Astrocyte of the cerebellum (primary cell): ENCODE measurements at regions of chr5 and their contacts with region 1.

Region 1: GRCh38 chr5:143205386-143205785 is 198.1 kb downstream of the NR3C1 start:
- DNase-seq: peak; percentile 81
- H3K4me3 ChIP-seq: no peak overlapping the region
- CTCF ChIP-seq: no peak

Region 2: GRCh38 chr5:143279698-143280097 is 74.3 kb after region 1 on chr5:
- in situ Hi-C with region 1: loop called (anchors 5 kb)
- DNase-seq: no peak
- H3K4me3 ChIP-seq: no peak overlapping the region
- CTCF ChIP-seq: no peak